ENCODE measurements at regions of chr20 and their contacts with region 1.

Region 1: GRCh38 chr20:41173161-41173721 is 35.9 kb downstream of the PLCG1 start:
- DNase-seq: peak; percentile 63
- ATAC-seq: peak; percentile 81
- H3K4me3 Mint-ChIP-seq: no peak overlapping the region
- H3K27ac Mint-ChIP-seq: no peak overlapping the region
- H3K4me1 Mint-ChIP-seq: peaks cover 15% of the 10 kb centered on the region
- H3K27me3 Mint-ChIP-seq: no peaks in the 10 kb centered on the region

Region 2: DNA sequence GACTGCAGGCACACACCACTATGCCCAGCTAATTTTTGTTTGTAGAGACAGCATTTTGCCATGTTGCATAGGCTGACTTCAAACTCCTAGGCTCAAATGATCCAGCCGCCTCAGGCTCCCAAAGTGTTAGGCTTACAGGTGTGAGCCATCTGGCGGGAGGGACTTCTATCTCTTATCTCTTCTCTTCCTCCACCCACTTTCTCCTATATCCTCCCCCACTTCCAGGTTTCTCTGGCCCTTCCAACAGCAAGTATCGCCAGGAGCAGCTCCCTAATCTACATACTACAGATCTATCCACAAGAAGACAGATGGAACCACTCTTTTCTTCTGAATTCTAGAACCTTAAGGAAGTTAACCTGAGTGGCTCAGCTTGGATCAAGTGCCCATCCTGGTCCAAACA is 149.7 kb before region 1 on chr20:
- CTCF ChIA-PET with region 1: no interaction called
- DNase-seq: no peak
- ATAC-seq: no peak
- H3K4me3 Mint-ChIP-seq: no peak overlapping the region
- H3K27ac Mint-ChIP-seq: no peak overlapping the region
- H3K4me1 Mint-ChIP-seq: peaks cover 9% of the 10 kb centered on the region
- H3K27me3 Mint-ChIP-seq: peaks cover 2% of the 10 kb centered on the region

Region 3: DNA sequence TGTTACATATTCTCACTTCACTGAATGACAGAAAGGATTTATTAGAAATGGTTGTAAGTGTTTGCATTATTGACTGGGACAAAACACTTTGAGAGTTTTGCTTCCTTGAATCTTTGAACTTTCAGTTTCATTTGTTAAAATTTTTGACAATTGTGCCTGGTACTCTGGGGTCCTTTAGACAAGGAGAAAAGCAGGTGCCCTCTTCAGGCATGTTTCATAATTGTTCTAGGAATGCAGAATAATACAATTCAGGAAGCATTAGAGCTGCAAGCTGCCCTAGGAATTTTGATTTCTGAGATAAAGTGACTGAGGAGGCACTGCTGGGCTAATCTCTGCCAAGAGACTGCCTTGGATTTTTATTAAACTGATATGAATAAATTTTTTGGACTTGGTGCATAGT is 94.9 kb before region 1 on chr20:
- CTCF ChIA-PET with region 1: no interaction called
- DNase-seq: no peak
- ATAC-seq: no peak
- H3K4me3 Mint-ChIP-seq: peak overlapping the region; percentile 46
- H3K27ac Mint-ChIP-seq: peak overlapping the region; percentile 81
- H3K4me1 Mint-ChIP-seq: peaks cover 62% of the 10 kb centered on the region
- H3K27me3 Mint-ChIP-seq: no peaks in the 10 kb centered on the region

Region 4: GRCh38 chr20:41101660-41102059 is 71.6 kb before region 1 on chr20:
- CTCF ChIA-PET with region 1: no interaction called
- DNase-seq: no peak
- ATAC-seq: no peak
- H3K4me3 Mint-ChIP-seq: no peak overlapping the region
- H3K27ac Mint-ChIP-seq: no peak overlapping the region
- H3K4me1 Mint-ChIP-seq: no peaks in the 10 kb centered on the region
- H3K27me3 Mint-ChIP-seq: no peaks in the 10 kb centered on the region

Region 5: GRCh38 chr20:41149679-41150131 is 23.5 kb before region 1 on chr20:
- CTCF ChIA-PET with region 1: interaction called, 11 read pairs
- DNase-seq: no peak
- ATAC-seq: no peak
- H3K4me3 Mint-ChIP-seq: no peak overlapping the region
- H3K27ac Mint-ChIP-seq: peak overlapping the region; percentile 35
- H3K4me1 Mint-ChIP-seq: peaks cover 96% of the 10 kb centered on the region
- H3K27me3 Mint-ChIP-seq: no peaks in the 10 kb centered on the region

Region 6: GRCh38 chr20:41158082-41158645 is 15.1 kb before region 1 on chr20:
- CTCF ChIA-PET with region 1: interaction called, 24 read pairs
- DNase-seq: no peak
- ATAC-seq: no peak
- H3K4me3 Mint-ChIP-seq: peak overlapping the region; percentile 76
- H3K27ac Mint-ChIP-seq: peak overlapping the region; percentile 99
- H3K4me1 Mint-ChIP-seq: peaks cover 86% of the 10 kb centered on the region
- H3K27me3 Mint-ChIP-seq: no peaks in the 10 kb centered on the region

Region 7: GRCh38 chr20:41339507-41340326 is 166.5 kb after region 1 on chr20:
- CTCF ChIA-PET with region 1: interaction called, 21 read pairs
- DNase-seq: peak; percentile 86
- ATAC-seq: peak; percentile 93
- H3K4me3 Mint-ChIP-seq: peak overlapping the region; percentile 70
- H3K27ac Mint-ChIP-seq: peak overlapping the region; percentile 54
- H3K4me1 Mint-ChIP-seq: peaks cover 11% of the 10 kb centered on the region
- H3K27me3 Mint-ChIP-seq: peaks cover 11% of the 10 kb centered on the region

Measured in activated CD8-positive, alpha-beta memory T cell treated with anti-CD3 and anti-CD28 coated beads, Interleukin-2, amount 10 ng/mL, durations not matched to agents 7 days and 5 days (primary cell).